H1 (cell line): ENCODE measurements at regions of chr17 and their contacts with region 1.

Region 1: DNA sequence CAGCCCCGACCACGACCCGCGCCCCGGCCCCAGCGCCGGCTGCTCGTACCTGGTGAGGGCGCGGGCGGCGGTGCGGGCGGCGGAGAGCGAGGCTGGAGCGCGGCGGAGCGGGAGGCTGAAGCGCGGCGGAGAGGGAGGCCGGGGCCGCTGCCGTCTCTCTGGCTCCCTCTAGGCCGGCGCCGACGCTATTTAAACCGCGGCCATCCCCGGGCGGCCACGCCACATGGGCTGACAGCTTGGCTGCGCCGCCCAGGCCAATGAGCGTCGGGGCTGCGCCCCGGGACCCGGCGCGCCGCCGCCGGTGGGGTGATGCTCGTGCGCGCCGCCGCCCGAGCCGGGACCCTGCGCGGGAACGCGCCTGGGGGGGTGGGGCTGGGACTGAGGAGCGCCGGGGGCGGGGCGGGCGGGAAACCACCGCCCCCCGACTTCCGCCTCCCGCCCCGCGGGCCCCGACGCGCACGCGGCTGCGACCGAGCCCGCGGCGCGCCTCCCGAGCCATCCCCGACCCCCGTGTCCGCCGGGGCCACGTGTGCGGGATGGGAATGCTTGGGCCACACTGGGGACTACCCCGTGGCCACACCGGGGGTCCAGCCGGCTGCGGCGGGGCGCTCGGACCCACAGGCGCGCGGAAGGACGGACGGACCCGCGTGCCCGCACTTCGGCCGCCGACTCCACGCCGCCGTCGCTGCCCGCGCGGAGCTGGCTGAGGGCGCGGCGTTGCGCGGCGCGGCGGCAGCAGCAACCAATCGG is at the start of gene FASN:
- DNase-seq: peak; percentile 81 to 89
- H3K4me3 ChIP-seq: peak within 1 kb of the TSS; percentile 62 to 94 (median 78)
- H3K27ac ChIP-seq: peak within 1 kb of the TSS; percentile 96
- H3K4me1 ChIP-seq: peaks cover 0 to 47% (median 38%) of the 10 kb centered on the region in 4 experiments; a peak in 6 of 7 replicates
- H3K27me3 ChIP-seq: no peaks in the 10 kb centered on the region
- CTCF ChIP-seq: peak in 2 of 3 experiments; percentile 40 to 48; a peak in 2 of 4 replicates
- EP300 ChIP-seq: no peak; a peak in 1 of 3 replicates
- POLR2A ChIP-seq: peak; percentile 86 to 92
- RAD21 ChIP-seq: peak in 1 of 2 experiments; percentile 20; a peak in 2 of 4 replicates
- total RNA-seq, gene FASN: 559 and 561 TPM in 2 replicates

Region 2: DNA sequence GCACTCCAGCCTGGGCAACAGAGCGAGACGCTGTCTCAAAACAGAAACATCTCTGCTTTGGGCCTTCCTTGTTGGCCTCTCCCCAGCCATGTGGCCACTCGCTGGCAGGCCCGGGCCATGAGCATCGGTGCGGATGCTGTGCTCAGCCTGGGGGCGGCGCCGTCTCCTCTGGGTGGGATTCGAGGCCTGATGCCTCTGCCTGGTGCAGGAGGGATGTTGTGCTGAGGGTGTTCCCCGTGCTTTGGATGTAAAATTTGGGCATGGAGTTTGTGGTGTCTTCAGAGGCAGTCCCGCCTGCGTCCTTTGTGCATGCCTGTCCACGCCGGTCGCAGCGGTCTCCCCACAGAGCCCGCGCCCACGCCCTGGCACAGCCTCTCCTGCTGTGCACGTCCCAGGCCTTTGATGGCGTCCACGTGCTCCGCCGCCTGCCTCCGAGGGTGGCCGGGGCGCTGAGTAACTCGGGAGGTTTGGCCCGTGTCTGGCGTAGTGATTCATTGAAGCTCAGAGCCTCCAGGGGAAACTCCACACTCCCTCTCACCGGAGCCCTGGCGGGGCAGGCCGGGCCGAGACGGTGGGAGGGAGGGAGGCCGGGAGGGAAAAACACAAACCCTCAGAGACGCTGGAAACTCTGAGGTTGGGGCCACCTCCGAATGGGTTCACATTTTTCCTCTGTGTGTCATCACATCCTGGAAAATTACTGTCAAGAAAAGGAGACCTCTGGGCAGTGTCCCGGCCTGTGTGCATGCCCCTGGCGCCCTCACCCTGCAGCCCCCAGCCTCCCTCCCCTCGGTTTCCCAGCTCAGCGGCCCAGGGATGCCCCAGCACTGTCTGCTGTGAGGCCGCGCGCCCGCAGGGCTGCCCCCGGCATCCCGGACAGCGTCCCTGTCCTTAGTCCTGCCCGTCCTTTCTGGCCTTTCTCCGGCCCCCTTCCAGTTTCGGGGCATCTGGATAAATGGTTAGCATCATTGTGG is 94.6 kb before region 1 on chr17:
- CTCF ChIA-PET with region 1: no interaction called
- POLR2A ChIA-PET with region 1: no interaction called
- DNase-seq: peak in 1 of 2 experiments; percentile 51
- H3K4me3 ChIP-seq: no peak overlapping the region
- H3K27ac ChIP-seq: no peak overlapping the region
- H3K4me1 ChIP-seq: peaks cover 0 to 1% (median 0%) of the 10 kb centered on the region in 4 experiments; a peak in 1 of 7 replicates
- H3K27me3 ChIP-seq: no peaks in the 10 kb centered on the region
- CTCF ChIP-seq: peak in 2 of 3 experiments; percentile 14 to 35; a peak in 3 of 4 replicates
- EP300 ChIP-seq: no peak
- POLR2A ChIP-seq: no peak
- RAD21 ChIP-seq: no peak; a peak in 1 of 4 replicates

Region 3: GRCh38 chr17:82065638-82066303 is 32.5 kb before region 1 on chr17 and contains the start of gene DUS1L:
- CTCF ChIA-PET with region 1: interaction called, 5 read pairs
- POLR2A ChIA-PET with region 1: interaction called, 11 read pairs
- DNase-seq: peak in 1 of 2 experiments; percentile 85
- H3K4me3 ChIP-seq: peak within 1 kb of the TSS; percentile 53 to 93 (median 77)
- H3K27ac ChIP-seq: no peak within 1 kb of the TSS
- H3K4me1 ChIP-seq: peaks cover 0 to 10% (median 5%) of the 10 kb centered on the region in 4 experiments; a peak in 5 of 7 replicates
- H3K27me3 ChIP-seq: no peaks in the 10 kb centered on the region
- CTCF ChIP-seq: no peak
- EP300 ChIP-seq: peak; percentile 17 to 60; a peak in 2 of 3 replicates
- POLR2A ChIP-seq: no peak
- RAD21 ChIP-seq: no peak
- total RNA-seq, gene DUS1L: 68.0 and 69.1 TPM in 2 replicates

Region 4: DNA sequence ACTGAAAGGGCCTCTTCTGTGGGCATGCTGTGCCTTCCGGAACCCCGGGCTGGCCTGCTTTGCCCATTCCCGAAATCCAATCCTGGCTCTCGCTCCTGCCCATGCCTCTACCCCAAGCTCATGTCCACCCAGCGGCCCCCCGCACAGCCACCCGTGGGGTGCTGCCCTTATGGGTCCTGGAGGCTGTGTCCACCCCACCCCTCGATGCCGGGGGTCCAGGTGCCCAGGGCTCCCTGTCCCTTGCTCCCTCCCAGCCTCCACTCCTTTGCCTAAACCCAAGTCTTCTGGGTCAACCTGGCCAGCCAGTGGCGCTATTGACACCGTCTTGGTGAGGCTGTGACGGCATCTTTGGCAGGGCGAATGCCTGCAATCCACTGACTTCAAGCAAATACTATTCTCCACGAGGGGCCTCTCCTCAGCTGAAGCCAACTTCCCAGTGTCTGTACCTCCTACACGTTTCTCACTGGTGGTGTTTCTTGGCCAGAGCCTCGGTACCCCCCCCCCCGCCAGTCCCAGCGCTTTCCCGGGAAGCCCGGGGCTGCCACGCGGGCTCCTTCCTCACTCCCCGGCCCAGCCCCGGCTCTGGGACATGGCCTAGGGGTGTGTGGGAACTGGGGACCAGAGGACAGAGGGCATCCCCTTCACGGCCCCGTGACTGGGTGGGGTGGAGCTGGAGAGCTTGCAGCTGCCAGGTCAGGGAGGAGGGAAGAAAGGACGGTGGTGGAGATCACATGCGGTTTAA is 20.5 kb before region 1 on chr17:
- CTCF ChIA-PET with region 1: interaction called, 3 read pairs
- POLR2A ChIA-PET with region 1: interaction called, 105 read pairs
- DNase-seq: no peak
- H3K4me3 ChIP-seq: no peak overlapping the region
- H3K27ac ChIP-seq: no peak overlapping the region
- H3K4me1 ChIP-seq: no peaks in the 10 kb centered on the region
- H3K27me3 ChIP-seq: no peaks in the 10 kb centered on the region; a peak in 1 of 7 replicates
- CTCF ChIP-seq: peak; percentile 26 to 44 (median 33)
- EP300 ChIP-seq: no peak
- POLR2A ChIP-seq: no peak
- RAD21 ChIP-seq: peak in 1 of 2 experiments; percentile 39; a peak in 3 of 4 replicates

Region 5: DNA sequence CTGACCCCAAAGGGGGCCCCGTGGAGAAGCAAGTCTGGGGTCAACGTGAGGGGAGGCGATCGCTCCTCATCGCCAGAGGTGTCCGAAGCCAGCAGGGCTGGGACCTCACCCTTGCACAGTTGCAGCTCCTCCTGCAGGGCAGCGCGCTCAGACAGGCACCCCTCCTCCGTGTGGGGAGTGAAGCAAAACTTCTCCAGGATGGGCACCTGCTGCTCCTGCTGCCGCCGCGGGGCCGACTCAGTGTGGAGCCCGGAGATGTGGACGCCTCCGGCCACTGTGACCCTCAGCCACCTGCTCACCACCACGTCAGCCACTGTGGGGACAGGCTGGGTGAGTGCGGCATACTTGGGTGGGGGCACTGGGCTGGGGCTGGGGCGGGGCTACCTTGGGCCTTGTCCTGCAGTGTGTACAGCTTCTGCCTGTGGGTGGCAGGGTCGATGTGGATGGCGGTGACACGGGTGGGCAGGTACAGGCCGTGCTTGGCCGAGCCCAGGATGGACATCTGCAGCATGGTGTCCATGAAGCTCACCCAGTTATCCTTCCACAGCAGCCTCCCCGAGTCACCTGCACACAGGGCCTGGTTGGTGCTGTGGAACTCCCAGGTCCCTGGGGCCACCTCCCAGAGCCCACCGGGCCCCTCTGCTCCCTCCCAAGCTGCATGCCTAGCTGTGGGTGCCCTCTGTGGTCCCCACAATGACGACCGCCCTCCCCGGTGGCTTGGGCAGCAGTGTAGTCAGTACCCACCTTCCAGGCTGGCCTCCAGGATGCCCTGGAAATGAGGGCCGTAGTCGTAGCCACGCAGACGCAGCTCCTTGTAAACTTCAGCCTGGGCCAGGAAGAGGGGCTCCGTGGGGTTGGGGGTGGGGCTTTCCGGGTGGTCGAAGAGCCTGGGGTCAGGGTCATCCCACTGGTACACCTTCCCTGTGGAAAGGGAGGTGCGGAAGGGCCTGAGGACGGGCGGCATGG is 11.0 kb before region 1 on chr17:
- CTCF ChIA-PET with region 1: interaction called, 5 read pairs
- POLR2A ChIA-PET with region 1: interaction called, 105 read pairs
- DNase-seq: no peak
- H3K4me3 ChIP-seq: no peak overlapping the region
- H3K27ac ChIP-seq: no peak overlapping the region
- H3K4me1 ChIP-seq: no peaks in the 10 kb centered on the region
- H3K27me3 ChIP-seq: no peaks in the 10 kb centered on the region
- CTCF ChIP-seq: no peak
- EP300 ChIP-seq: no peak
- POLR2A ChIP-seq: no peak
- RAD21 ChIP-seq: no peak

Region 6: DNA sequence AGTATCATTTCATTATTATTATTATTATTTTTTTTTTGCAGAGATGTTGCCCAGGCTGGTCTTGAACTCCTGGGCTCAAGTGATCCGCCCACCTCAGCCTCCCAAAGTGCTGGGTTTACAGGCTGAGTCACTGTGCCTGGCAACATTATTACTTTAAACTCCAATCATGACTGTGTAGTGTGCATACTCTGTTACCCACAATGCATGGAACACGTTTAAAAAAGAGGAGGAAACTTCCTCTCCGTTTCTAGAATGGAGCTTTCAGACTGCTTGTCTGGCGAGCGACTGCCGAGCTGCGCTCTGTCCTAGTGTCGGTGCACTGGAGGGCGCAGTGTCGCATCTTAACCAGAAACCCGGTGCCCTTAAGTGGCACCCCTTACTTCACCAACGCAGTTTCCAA is 21.9 kb after region 1 on chr17:
- CTCF ChIA-PET with region 1: interaction called, 61 read pairs
- POLR2A ChIA-PET with region 1: interaction called, 13 read pairs
- DNase-seq: no peak
- H3K4me3 ChIP-seq: no peak overlapping the region
- H3K27ac ChIP-seq: no peak overlapping the region
- H3K4me1 ChIP-seq: peaks cover 0 to 8% (median 2%) of the 10 kb centered on the region in 4 experiments; a peak in 4 of 7 replicates
- H3K27me3 ChIP-seq: no peaks in the 10 kb centered on the region
- CTCF ChIP-seq: no peak
- EP300 ChIP-seq: no peak
- POLR2A ChIP-seq: no peak
- RAD21 ChIP-seq: no peak

Region 7: GRCh38 chr17:82153745-82154375 is 55.6 kb after region 1 on chr17:
- CTCF ChIA-PET with region 1: interaction called, 13 read pairs
- POLR2A ChIA-PET with region 1: interaction called, 13 read pairs
- DNase-seq: peak; percentile 56 to 94
- H3K4me3 ChIP-seq: no peak overlapping the region
- H3K27ac ChIP-seq: no peak overlapping the region
- H3K4me1 ChIP-seq: no peaks in the 10 kb centered on the region
- H3K27me3 ChIP-seq: no peaks in the 10 kb centered on the region
- CTCF ChIP-seq: peak; percentile 95 to 99 (median 99)
- EP300 ChIP-seq: no peak
- POLR2A ChIP-seq: no peak
- RAD21 ChIP-seq: peak; percentile 98 to 100

Region 8: DNA sequence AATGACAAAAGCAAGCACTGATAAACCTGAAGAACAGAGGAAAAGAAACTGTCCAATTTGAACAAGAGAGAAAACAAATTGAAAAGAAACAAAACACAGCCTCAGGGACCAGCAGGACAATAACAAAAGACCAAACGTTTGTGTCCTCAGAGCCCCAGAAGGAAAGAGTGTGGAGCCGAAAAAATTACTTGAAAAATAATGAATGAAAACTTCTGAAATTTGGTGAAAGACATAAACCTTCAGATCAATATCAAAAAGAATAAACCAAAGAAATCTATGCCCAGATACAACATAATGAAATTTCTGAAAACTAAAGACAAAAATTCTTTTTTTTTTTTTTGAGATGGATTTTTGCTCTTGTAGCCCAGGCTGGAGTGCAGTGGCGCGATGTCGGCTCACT is 68.8 kb after region 1 on chr17:
- CTCF ChIA-PET with region 1: no interaction called
- POLR2A ChIA-PET with region 1: no interaction called
- DNase-seq: no peak
- H3K4me3 ChIP-seq: no peak overlapping the region
- H3K27ac ChIP-seq: no peak overlapping the region
- H3K4me1 ChIP-seq: no peaks in the 10 kb centered on the region
- H3K27me3 ChIP-seq: peaks cover 11 to 19% (median 15%) of the 10 kb centered on the region in 4 experiments
- CTCF ChIP-seq: no peak
- EP300 ChIP-seq: no peak
- POLR2A ChIP-seq: no peak
- RAD21 ChIP-seq: no peak